Naive thymus-derived CD4-positive, alpha-beta T cell (primary cell): ENCODE measurements at regions of chr2 and their contacts with region 1.

Region 1: DNA sequence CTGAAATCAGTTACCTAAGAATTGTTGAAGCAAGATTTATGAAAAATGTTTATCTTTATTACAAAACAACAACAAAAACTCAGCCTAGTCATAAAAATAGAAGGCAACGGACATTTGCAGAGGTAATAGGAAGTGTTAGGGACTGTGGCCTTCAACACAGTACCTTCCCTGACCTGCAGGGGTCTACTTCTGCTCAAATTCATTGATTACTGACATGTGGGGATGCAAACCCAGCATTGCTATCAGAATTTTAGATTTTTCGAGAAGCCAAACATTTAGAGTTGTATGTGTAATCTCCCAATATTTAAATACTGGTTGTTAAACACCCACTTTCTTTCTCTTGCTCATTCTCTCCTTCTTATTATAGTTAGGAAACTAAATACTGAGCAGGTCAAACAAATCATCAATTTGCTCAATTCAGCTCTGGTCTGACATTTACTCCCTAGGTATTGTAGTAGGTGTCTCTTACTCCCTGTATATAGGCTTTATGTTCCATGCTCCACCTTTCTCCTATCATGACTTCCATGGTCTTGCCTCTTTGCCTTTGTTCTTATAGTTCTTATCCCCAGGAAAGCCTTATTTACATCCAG is 198.5 kb downstream of the UBE2E3 start:
- DNase-seq: peak in 6 of 9 donors; percentile 14 to 34 (median 30)
- ATAC-seq: peak; percentile 76
- H3K4me3 ChIP-seq: no peak overlapping the region
- H3K4me3 Mint-ChIP-seq: peak overlapping the region in 2 of 10 donors; percentile 19 to 25
- H3K27ac ChIP-seq: no peak overlapping the region
- H3K27ac Mint-ChIP-seq: peak overlapping the region in 8 of 9 donors; percentile 1 to 65 (median 44)
- H3K4me1 ChIP-seq: peaks cover 15 to 16% of the 10 kb centered on the region in 2 donors
- H3K4me1 Mint-ChIP-seq: peaks cover 7 to 58% (median 45%) of the 10 kb centered on the region in 7 donors
- H3K27me3 ChIP-seq: no peaks in the 10 kb centered on the region
- H3K27me3 Mint-ChIP-seq: no peaks in the 10 kb centered on the region

Region 2: DNA sequence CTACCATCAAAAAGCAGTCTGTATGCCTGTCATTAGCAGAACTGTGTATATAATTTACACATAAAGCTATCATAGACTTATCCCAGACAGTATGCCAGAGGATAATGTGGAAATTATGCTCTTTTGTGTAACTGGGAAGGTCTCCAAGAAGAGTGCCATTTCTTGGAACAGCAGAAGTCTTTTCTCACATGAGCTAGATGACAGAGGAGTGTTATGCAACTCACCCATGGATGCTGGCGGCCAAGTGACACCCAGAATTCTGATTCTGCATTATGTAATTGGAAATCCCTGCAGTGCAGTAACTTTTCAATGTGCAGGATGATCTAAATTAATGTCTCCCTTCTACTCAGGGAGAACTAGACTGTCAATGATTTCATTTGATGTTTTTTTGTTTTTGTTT is 38.5 kb before region 1 on chr2:
- CTCF ChIA-PET with region 1: interaction called, 3 read pairs
- POLR2A ChIA-PET with region 1: no interaction called
- intact Hi-C with region 1: loop called in 1 of 2 experiments (anchors 5 kb)
- DNase-seq: peak in 1 of 9 donors; percentile 29
- ATAC-seq: peak; percentile 30
- H3K4me3 ChIP-seq: peak overlapping the region; percentile 20
- H3K4me3 Mint-ChIP-seq: peak overlapping the region; percentile 31 to 94 (median 86)
- H3K27ac ChIP-seq: peak overlapping the region; percentile 78
- H3K27ac Mint-ChIP-seq: peak overlapping the region; percentile 93 to 100 (median 98)
- H3K4me1 ChIP-seq: peaks cover 46 to 66% of the 10 kb centered on the region in 2 donors
- H3K4me1 Mint-ChIP-seq: peaks cover 33 to 83% (median 75%) of the 10 kb centered on the region in 7 donors
- H3K27me3 ChIP-seq: no peaks in the 10 kb centered on the region
- H3K27me3 Mint-ChIP-seq: no peaks in the 10 kb centered on the region

Region 3: GRCh38 chr2:181165199-181165868 is 13.6 kb before region 1 on chr2:
- CTCF ChIA-PET with region 1: no interaction called
- POLR2A ChIA-PET with region 1: interaction called, 5 read pairs
- intact Hi-C with region 1: loop called (anchors 1 to 2 kb)
- DNase-seq: peak in 5 of 9 donors; percentile 28 to 54 (median 32)
- ATAC-seq: peak; percentile 77
- H3K4me3 ChIP-seq: peak overlapping the region; percentile 40
- H3K4me3 Mint-ChIP-seq: peak overlapping the region; percentile 73 to 87 (median 77)
- H3K27ac ChIP-seq: peak overlapping the region; percentile 58
- H3K27ac Mint-ChIP-seq: peak overlapping the region; percentile 89 to 98 (median 95)
- H3K4me1 ChIP-seq: peaks cover 31 to 45% of the 10 kb centered on the region in 2 donors
- H3K4me1 Mint-ChIP-seq: peaks cover 22 to 64% (median 51%) of the 10 kb centered on the region in 7 donors
- H3K27me3 ChIP-seq: no peaks in the 10 kb centered on the region
- H3K27me3 Mint-ChIP-seq: no peaks in the 10 kb centered on the region

Region 4: DNA sequence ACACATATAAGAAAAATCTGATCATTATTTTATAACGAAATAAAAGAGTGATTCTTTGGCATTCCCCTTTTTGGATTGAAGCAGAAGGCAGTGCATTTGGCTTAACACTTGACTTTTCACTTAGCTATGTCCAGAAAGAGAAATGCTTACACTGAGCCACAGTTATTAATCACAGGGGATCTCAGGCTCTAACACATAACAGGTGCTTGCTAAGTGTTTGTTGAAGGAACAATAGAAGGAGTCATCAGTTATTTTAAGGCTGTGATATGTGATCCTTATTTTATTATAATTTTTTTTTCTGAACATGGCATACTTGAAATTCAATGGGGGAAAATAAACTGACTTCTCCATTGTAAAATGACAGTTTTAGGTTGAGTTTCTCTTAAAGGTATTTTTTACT is 11.0 kb after region 1 on chr2:
- CTCF ChIA-PET with region 1: no interaction called
- POLR2A ChIA-PET with region 1: interaction called, 8 read pairs
- intact Hi-C with region 1: loop called in 1 of 2 experiments (anchors 1 kb)
- DNase-seq: no peak
- ATAC-seq: no peak
- H3K4me3 ChIP-seq: no peak overlapping the region
- H3K4me3 Mint-ChIP-seq: no peak overlapping the region
- H3K27ac ChIP-seq: no peak overlapping the region
- H3K27ac Mint-ChIP-seq: no peak overlapping the region
- H3K4me1 ChIP-seq: peaks cover 6 to 7% of the 10 kb centered on the region in 2 donors
- H3K4me1 Mint-ChIP-seq: peaks cover 11 to 67% (median 39%) of the 10 kb centered on the region in 7 donors
- H3K27me3 ChIP-seq: no peaks in the 10 kb centered on the region
- H3K27me3 Mint-ChIP-seq: no peaks in the 10 kb centered on the region

Region 5: GRCh38 chr2:181281206-181281832 is 102.4 kb after region 1 on chr2:
- CTCF ChIA-PET with region 1: no interaction called
- POLR2A ChIA-PET with region 1: interaction called, 3 read pairs
- intact Hi-C with region 1: loop called in 1 of 2 experiments (anchors 2 kb)
- DNase-seq: peak in 7 of 9 donors; percentile 47 to 84 (median 70)
- ATAC-seq: peak; percentile 92
- H3K4me3 ChIP-seq: no peak overlapping the region
- H3K4me3 Mint-ChIP-seq: peak overlapping the region in 9 of 10 donors; percentile 10 to 74 (median 62)
- H3K27ac ChIP-seq: peak overlapping the region; percentile 17
- H3K27ac Mint-ChIP-seq: peak overlapping the region; percentile 75 to 95 (median 84)
- H3K4me1 ChIP-seq: peaks cover 18 to 31% of the 10 kb centered on the region in 2 donors
- H3K4me1 Mint-ChIP-seq: peaks cover 24 to 69% (median 58%) of the 10 kb centered on the region in 7 donors
- H3K27me3 ChIP-seq: no peaks in the 10 kb centered on the region
- H3K27me3 Mint-ChIP-seq: no peaks in the 10 kb centered on the region

Region 6: DNA sequence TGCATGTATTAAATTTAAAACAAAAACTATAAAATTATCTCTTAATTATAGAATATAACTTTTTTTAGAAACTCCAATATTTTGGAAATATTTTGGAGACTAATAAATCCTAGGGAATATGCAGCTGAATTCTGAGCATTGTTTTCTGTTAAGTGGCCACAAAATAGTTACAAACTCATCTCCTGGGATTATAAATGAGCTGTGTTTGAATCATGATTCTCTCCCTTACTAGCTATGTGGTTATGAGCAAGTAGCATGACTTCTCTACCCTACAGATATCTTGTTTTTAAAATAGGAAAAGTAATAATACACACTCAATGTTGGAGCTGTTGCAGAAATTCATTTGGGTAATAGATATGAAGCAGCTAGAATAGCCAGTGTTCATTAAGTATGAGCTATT is 140.4 kb after region 1 on chr2:
- CTCF ChIA-PET with region 1: no interaction called
- POLR2A ChIA-PET with region 1: no interaction called
- intact Hi-C with region 1: loop called in 1 of 2 experiments (anchors 5 kb)
- DNase-seq: no peak
- ATAC-seq: no peak
- H3K4me3 ChIP-seq: no peak overlapping the region
- H3K4me3 Mint-ChIP-seq: no peak overlapping the region
- H3K27ac ChIP-seq: no peak overlapping the region
- H3K27ac Mint-ChIP-seq: peak overlapping the region in 1 of 9 donors; percentile 7
- H3K4me1 ChIP-seq: peaks cover 7 to 8% of the 10 kb centered on the region in 2 donors
- H3K4me1 Mint-ChIP-seq: peaks cover 11 to 30% (median 17%) of the 10 kb centered on the region in 7 donors
- H3K27me3 ChIP-seq: no peaks in the 10 kb centered on the region
- H3K27me3 Mint-ChIP-seq: no peaks in the 10 kb centered on the region

Region 7: DNA sequence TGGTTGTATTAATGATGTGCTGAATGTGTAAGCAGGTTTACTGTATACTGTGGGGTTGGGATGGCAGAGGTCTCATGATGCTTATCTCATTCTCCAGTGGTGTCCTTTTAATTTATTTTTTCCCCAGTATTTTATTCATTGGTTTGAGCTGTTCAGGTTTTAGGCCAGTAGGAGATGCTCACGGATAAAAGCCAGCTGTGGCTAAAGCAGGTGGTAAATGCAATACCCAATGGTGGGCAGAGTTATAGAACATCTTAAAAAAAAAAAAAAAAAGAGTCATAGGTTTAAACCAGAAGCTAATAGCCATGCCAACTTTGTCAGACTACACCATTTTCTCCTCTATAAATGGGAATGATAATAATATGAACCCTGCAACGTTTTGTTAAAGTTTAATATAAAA is 559.2 kb after region 1 on chr2:
- CTCF ChIA-PET with region 1: no interaction called
- POLR2A ChIA-PET with region 1: no interaction called
- intact Hi-C with region 1: no loop called
- DNase-seq: no peak
- ATAC-seq: peak; percentile 31
- H3K4me3 ChIP-seq: no peak overlapping the region
- H3K4me3 Mint-ChIP-seq: no peak overlapping the region
- H3K27ac ChIP-seq: no peak overlapping the region
- H3K27ac Mint-ChIP-seq: no peak overlapping the region
- H3K4me1 ChIP-seq: no peaks in the 10 kb centered on the region
- H3K4me1 Mint-ChIP-seq: no peaks in the 10 kb centered on the region
- H3K27me3 ChIP-seq: no peaks in the 10 kb centered on the region
- H3K27me3 Mint-ChIP-seq: peaks cover 9 to 48% (median 14%) of the 10 kb centered on the region in 5 donors